OCI-LY7 (cell line): ENCODE measurements at regions of chr9 and their contacts with region 1.

Region 1: DNA sequence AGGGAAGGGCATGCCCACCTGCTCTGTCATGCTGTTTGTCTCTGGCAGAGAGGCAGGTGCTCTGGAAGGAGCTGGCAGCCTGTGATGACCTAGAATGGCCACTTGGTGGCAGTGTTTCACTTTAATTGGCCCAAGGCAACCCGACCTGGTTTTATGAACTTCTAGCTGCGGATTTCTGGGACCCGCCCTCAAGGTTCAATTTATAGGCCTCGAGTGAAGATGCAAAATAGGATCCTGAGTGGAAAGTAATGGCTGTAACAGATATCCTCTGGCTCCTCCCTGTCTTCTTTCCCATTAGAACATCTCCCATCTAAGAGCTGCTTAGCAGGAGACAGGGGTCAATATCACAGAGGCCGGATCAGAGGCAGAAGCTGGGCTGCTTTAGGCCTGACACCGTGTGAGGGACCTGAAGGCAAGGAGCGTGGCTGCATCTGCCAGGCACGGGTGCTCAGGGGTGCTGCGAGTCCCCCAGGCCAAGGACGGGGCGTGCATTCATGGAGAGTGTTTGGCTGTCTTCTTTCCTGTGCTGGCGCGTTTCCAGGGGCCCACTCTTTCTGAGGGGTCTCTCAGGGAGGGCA is 56.7 kb upstream of the SLC28A3 start:
- DNase-seq: peak; percentile 68
- H3K4me3 ChIP-seq: no peak overlapping the region
- H3K27ac ChIP-seq: no peak overlapping the region
- H3K4me1 ChIP-seq: no peaks in the 10 kb centered on the region
- CTCF ChIP-seq: peak; percentile 88

Region 2: GRCh38 chr9:84343111-84343521 is 54.1 kb before region 1 on chr9:
- CTCF ChIA-PET with region 1: no interaction called
- POLR2A ChIA-PET with region 1: no interaction called
- intact Hi-C with region 1: no loop called
- DNase-seq: no peak
- H3K4me3 ChIP-seq: no peak overlapping the region
- H3K27ac ChIP-seq: no peak overlapping the region
- H3K4me1 ChIP-seq: no peaks in the 10 kb centered on the region
- CTCF ChIP-seq: no peak

Region 3: DNA sequence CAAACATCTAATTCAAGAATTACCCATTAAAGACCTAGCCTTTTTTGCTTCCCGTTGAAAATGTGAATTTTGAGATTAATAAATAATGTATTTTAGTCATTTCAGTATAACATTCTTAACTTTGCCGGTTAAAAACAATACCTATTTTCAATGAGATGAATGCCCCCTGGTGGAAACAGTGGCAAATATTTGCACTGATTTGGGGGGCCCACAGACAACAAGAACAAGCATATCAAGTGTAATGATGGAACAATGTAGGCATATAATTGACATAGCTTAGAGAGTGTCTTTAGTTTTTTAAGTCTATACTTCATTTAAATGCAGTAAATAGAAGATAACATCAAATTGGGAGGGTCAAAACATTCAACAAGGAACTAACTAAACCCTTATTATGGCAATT is 384.2 kb after region 1 on chr9:
- CTCF ChIA-PET with region 1: no interaction called
- POLR2A ChIA-PET with region 1: interaction called, 4 read pairs
- intact Hi-C with region 1: loop called (anchors 5 kb)
- DNase-seq: peak; percentile 16
- H3K4me3 ChIP-seq: no peak overlapping the region
- H3K27ac ChIP-seq: no peak overlapping the region
- H3K4me1 ChIP-seq: no peaks in the 10 kb centered on the region
- CTCF ChIP-seq: peak; percentile 77

Region 4: GRCh38 chr9:85425153-85425611 is 1027.9 kb after region 1 on chr9:
- CTCF ChIA-PET with region 1: no interaction called
- POLR2A ChIA-PET with region 1: no interaction called
- intact Hi-C with region 1: loop called (anchors 10 kb)
- DNase-seq: peak; percentile 47
- H3K4me3 ChIP-seq: no peak overlapping the region
- H3K27ac ChIP-seq: no peak overlapping the region
- H3K4me1 ChIP-seq: no peaks in the 10 kb centered on the region
- CTCF ChIP-seq: peak; percentile 86